HCT116 (cell line): ENCODE measurements at regions of chr19 and their contacts with region 1.

Region 1: DNA sequence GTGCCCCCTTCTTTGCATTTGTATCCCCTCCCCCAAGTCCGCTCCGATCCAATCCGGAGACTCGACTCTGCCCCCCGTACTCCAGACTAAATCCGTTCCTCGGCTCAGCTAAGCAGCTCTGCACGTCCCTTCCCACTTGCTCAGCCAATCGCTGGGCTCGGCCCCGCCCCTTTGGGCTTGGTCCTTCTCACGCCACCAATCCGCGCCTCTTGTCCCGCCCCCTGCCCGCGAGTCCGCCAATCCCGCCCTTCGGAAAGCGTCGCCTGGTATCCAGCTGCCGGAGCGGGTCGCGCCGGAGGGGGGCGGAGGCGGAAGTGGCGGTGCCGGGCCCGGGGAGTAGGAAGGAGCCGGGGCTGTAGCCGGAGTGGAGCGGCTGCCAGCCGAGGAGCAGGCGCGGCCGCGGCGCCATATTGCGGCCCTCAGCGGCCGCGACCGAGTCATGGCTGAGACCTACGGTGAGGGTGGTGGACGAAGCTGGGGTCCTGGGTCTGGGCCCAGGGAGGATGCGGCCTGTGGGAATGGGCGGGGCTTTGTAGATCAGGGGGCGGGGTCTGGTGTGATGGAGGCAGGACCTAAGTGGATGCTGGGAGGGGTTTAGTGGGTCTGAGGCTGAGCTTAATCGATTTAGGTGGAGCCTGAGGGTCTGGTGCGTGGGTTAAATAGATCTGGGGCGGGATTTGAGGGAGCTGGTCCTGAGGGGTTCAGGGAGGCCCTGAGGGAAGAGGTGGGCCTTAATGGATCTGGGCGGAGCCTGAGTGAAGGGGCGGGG is at the start of gene RAB4B:
- DNase-seq: peak; percentile 99
- ATAC-seq: peak; percentile 84
- H3K4me3 ChIP-seq: peak within 1 kb of the TSS; percentile 67 to 68
- H3K27ac ChIP-seq: peak within 1 kb of the TSS; percentile 92
- H3K4me1 ChIP-seq: peaks cover 15 to 34% of the 10 kb centered on the region in 2 experiments
- H3K27me3 ChIP-seq: no peaks in the 10 kb centered on the region
- CTCF ChIP-seq: no peak
- POLR2A ChIP-seq: no peak
- RAD21 ChIP-seq: no peak
- total RNA-seq, gene RAB4B: 18.7 TPM

Region 2: GRCh38 chr19:40724855-40725254 is 53.3 kb before region 1 on chr19:
- CTCF ChIA-PET with region 1: no interaction called
- POLR2A ChIA-PET with region 1: no interaction called
- RAD21 ChIA-PET with region 1: no interaction called
- intact Hi-C with region 1: no loop called
- DNase-seq: no peak
- ATAC-seq: no peak
- H3K4me3 ChIP-seq: no peak overlapping the region
- H3K27ac ChIP-seq: no peak overlapping the region
- H3K4me1 ChIP-seq: peaks cover 1 to 17% of the 10 kb centered on the region in 2 experiments; a peak in 3 of 4 replicates
- H3K27me3 ChIP-seq: no peaks in the 10 kb centered on the region
- CTCF ChIP-seq: no peak
- POLR2A ChIP-seq: no peak
- RAD21 ChIP-seq: no peak

Region 3: GRCh38 chr19:40798223-40798996 is 20.3 kb after region 1 on chr19:
- CTCF ChIA-PET with region 1: interaction called, 17 read pairs
- POLR2A ChIA-PET with region 1: interaction called, 19 read pairs
- RAD21 ChIA-PET with region 1: no interaction called
- intact Hi-C with region 1: loop called (anchors 1 kb)
- DNase-seq: peak; percentile 99
- ATAC-seq: peak; percentile 85
- H3K4me3 ChIP-seq: peak overlapping the region; percentile 55 to 88
- H3K27ac ChIP-seq: peak overlapping the region; percentile 87
- H3K4me1 ChIP-seq: peaks cover 10 to 42% of the 10 kb centered on the region in 2 experiments
- H3K27me3 ChIP-seq: no peaks in the 10 kb centered on the region
- CTCF ChIP-seq: peak; percentile 14 to 47 (median 30); a peak in 3 of 6 replicates
- POLR2A ChIP-seq: no peak
- RAD21 ChIP-seq: no peak

Region 4: DNA sequence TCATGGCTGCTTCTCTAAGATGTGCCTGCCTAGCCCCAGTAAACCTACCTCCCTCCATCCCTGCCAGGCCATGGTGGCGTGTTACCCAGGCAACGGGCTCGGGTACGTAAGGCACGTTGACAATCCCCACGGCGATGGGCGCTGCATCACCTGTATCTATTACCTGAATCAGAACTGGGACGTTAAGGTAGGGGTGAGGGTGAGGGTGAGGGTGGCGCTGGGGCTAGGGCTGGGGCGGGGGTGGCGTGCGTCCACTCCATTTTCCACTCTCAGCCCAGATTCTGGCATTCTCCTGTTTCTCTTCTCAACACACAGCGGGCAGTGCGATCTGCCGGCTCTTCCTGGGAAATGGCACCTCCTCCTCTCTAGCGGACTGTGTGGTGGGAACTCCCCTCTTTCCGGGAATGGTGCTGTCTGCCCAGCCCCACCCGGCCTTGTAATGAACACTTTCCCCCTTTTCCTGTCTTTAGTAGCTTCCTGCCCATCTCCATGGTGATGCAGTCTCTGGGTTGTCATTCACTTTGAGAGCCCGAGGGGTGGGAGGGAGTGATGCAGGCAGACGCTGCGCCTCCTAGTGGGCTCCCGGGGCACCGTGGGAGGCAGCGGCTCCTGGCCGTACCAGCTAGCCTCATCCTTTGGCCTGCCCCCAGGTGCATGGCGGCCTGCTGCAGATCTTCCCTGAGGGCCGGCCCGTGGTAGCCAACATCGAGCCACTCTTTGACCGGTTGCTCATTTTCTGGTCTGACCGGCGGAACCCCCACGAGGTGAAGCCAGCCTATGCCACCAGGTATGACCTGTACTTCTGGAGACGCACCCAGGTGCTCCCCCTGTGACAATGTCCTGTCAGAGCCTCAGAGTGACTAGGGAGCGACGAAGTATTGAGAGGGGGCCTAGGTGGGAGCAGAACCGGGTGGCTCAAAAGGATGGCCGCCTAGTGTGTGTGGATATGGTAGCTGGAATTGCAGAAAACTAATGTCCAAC is 28.7 kb after region 1 on chr19:
- CTCF ChIA-PET with region 1: interaction called, 16 read pairs
- POLR2A ChIA-PET with region 1: no interaction called
- RAD21 ChIA-PET with region 1: no interaction called
- intact Hi-C with region 1: no loop called
- DNase-seq: peak; percentile 57
- ATAC-seq: peak; percentile 69
- H3K4me3 ChIP-seq: no peak overlapping the region
- H3K27ac ChIP-seq: peak overlapping the region; percentile 19; the same call in 1 of the 2 replicates
- H3K4me1 ChIP-seq: peaks cover 22 to 68% of the 10 kb centered on the region in 2 experiments
- H3K27me3 ChIP-seq: no peaks in the 10 kb centered on the region
- CTCF ChIP-seq: peak; percentile 72 to 93 (median 90); a peak in 5 of 6 replicates
- POLR2A ChIP-seq: no peak
- RAD21 ChIP-seq: peak; percentile 61